ENCODE measurements at regions of chr16 and their contacts with region 1.

Region 1: GRCh38 chr16:6335076-6335475 is 997.6 kb upstream of the RBFOX1 start:
- DNase-seq: no peak
- ATAC-seq: no peak
- H3K4me3 ChIP-seq: no peak overlapping the region
- H3K4me3 Mint-ChIP-seq: no peak overlapping the region
- H3K27ac ChIP-seq: no peak overlapping the region
- H3K27ac Mint-ChIP-seq: no peak overlapping the region
- H3K4me1 ChIP-seq: no peaks in the 10 kb centered on the region
- H3K4me1 Mint-ChIP-seq: no peaks in the 10 kb centered on the region
- H3K27me3 ChIP-seq: no peaks in the 10 kb centered on the region
- H3K27me3 Mint-ChIP-seq: no peaks in the 10 kb centered on the region

Region 2: DNA sequence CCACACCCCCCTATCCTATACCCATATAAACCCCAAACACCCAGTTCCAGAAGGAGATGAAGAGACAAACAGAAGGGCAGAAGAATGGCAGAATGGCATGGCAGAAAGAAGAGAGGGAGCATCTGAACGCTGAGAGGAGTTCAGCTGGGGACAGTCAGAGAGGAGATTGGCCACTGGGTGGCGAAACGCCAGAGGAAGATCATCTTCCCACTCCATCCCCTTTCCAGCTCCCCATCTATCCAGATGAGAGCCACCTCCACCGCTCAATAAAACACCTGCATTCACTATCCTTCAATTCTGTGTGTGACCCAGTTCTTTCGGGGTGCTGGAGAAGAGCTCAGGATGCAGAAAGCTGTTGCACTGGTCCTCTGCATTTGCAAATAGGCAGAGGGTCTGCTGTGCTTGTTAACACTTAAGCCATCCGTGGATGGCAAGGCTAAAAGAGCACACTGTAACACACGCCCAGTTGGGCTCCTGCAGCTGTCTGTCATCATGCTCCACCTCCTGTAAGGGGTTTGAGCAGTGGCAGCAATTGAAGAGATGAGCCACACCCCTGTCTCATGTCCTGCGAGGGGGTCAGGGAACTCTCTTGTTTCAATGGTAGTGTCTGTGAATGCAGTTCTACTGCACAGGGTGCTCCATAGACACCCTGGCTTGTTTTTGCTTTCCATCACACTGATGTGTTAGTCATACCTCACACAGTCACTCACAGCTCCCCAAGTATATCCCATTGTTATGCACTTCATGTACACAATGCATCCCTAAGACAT is 37.2 kb before region 1 on chr16:
- CTCF ChIA-PET with region 1: no interaction called
- POLR2A ChIA-PET with region 1: no interaction called
- intact Hi-C with region 1: no loop called
- DNase-seq: no peak
- ATAC-seq: no peak
- H3K4me3 ChIP-seq: no peak overlapping the region
- H3K4me3 Mint-ChIP-seq: no peak overlapping the region
- H3K27ac ChIP-seq: no peak overlapping the region
- H3K27ac Mint-ChIP-seq: no peak overlapping the region
- H3K4me1 ChIP-seq: no peaks in the 10 kb centered on the region
- H3K4me1 Mint-ChIP-seq: no peaks in the 10 kb centered on the region
- H3K27me3 ChIP-seq: no peaks in the 10 kb centered on the region
- H3K27me3 Mint-ChIP-seq: no peaks in the 10 kb centered on the region

Region 3: DNA sequence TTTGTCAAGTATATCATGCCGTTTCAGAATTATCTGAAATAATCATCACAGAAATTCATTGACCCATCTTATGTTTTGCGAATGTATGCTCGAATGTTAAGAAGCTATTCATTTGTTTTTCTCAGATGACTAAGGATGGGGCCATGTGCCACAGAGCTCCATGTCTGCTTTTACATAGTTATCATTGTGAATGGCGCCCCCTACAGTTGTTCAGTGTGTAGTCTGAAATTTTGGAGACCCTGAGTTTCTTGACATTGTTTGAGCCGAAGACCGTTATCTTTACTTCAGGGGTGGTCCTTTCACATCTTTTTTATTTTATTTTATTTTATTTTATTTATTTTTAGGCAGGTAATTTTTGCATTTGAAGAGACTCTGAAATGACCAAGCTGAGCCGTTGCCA is 25.6 kb after region 1 on chr16:
- CTCF ChIA-PET with region 1: no interaction called
- POLR2A ChIA-PET with region 1: no interaction called
- intact Hi-C with region 1: loop called in 1 of 2 experiments (anchors 1 kb)
- DNase-seq: no peak
- ATAC-seq: no peak
- H3K4me3 ChIP-seq: no peak overlapping the region
- H3K4me3 Mint-ChIP-seq: no peak overlapping the region
- H3K27ac ChIP-seq: no peak overlapping the region
- H3K27ac Mint-ChIP-seq: no peak overlapping the region
- H3K4me1 ChIP-seq: no peaks in the 10 kb centered on the region
- H3K4me1 Mint-ChIP-seq: no peaks in the 10 kb centered on the region
- H3K27me3 ChIP-seq: no peaks in the 10 kb centered on the region
- H3K27me3 Mint-ChIP-seq: no peaks in the 10 kb centered on the region

Region 4: GRCh38 chr16:6803176-6803575 is 468.1 kb after region 1 on chr16:
- CTCF ChIA-PET with region 1: no interaction called
- POLR2A ChIA-PET with region 1: no interaction called
- intact Hi-C with region 1: no loop called
- DNase-seq: no peak
- ATAC-seq: no peak
- H3K4me3 ChIP-seq: no peak overlapping the region
- H3K4me3 Mint-ChIP-seq: no peak overlapping the region
- H3K27ac ChIP-seq: no peak overlapping the region
- H3K27ac Mint-ChIP-seq: peak overlapping the region in 1 of 9 donors; percentile 42
- H3K4me1 ChIP-seq: no peaks in the 10 kb centered on the region
- H3K4me1 Mint-ChIP-seq: no peaks in the 10 kb centered on the region
- H3K27me3 ChIP-seq: no peaks in the 10 kb centered on the region
- H3K27me3 Mint-ChIP-seq: no peaks in the 10 kb centered on the region

Measured in naive thymus-derived CD4-positive, alpha-beta T cell (primary cell).